ENCODE measurements at regions of chr10 and their contacts with region 1.

Region 1: DNA sequence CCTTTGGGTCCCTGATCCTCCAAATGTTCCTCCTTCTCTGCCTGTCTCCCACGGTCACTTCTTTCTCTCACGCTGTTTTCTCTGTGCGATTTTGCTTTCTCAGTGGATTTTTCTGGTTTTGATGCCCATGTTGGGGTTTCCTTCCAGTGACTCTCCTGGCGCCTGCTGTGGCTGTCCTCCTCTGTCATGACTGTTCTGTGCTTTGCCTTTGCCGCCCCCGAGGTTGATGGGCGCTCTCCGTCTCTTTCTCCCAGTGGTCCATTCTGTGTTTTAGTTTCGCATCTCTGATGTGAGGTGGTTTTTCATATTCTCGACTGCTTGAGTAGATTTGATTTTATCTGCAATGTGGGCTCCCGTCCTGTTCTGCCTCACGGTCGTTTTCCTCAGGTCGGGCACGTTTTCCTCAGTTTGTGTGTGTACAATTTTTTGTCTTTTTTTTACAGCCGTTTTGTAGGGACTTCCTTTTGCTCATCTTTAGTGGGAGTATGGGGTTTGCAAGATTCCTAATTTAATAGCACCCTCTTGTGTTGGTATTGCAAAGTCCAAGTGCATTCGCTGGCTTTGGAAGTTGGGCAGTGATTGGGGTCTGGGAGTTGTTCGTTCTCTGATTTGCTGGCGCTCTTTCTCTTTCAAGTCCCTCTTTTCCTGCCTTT is 100.0 kb downstream of the INPP5A start:
- DNase-seq: peak in 7 of 10 donors; percentile 19 to 75 (median 33)

Region 2: DNA sequence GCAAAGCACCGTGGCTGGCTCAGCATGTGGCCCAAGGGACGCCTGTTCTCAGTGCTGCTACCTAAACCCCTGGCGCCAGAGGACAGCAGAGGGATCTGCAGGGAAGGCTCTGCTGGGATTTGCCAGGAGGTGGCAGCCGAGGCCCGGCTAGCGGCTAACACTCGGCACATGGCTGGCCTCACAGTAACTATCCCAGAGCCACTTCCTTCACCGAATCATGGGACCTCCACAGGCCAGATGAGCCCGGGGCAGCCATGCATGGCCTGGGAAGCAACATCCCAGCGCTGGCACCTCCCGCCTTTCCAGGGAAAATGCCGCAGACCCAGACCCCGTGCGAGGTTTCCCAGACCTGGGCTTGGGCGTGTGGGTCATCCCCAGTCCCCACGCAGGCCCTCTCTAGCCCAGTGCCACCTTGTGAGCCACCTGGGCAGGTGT is 414.4 kb before region 1 on chr10:
- intact Hi-C with region 1: loop called (anchors 5 kb)
- DNase-seq: peak; percentile 76 to 98 (median 88)

Region 3: DNA sequence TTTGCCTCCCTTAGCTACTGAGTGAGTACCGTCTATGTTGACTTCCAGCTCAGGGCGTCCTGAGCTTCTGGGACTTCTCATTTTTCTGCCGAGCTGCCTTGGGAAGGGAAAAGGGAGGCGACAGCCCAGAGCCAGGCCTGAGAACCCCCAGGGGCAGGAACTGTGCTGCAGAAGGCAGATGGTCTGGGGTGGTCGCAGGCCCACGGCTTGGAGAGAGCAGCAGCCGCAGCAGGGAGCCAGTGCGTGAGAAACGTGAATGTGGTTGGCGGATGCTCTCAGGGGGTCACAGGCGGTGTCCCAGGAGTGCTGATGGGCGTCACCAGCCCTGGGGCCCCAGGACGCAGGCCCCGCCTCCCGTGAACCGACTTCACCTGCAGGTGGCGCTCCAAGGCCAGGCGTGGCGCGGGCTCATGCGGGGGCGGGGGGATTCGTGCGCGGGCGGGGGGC is 249.8 kb before region 1 on chr10:
- intact Hi-C with region 1: loop called (anchors 5 kb)
- DNase-seq: peak in 8 of 10 donors; percentile 34 to 93 (median 57)

Region 4: DNA sequence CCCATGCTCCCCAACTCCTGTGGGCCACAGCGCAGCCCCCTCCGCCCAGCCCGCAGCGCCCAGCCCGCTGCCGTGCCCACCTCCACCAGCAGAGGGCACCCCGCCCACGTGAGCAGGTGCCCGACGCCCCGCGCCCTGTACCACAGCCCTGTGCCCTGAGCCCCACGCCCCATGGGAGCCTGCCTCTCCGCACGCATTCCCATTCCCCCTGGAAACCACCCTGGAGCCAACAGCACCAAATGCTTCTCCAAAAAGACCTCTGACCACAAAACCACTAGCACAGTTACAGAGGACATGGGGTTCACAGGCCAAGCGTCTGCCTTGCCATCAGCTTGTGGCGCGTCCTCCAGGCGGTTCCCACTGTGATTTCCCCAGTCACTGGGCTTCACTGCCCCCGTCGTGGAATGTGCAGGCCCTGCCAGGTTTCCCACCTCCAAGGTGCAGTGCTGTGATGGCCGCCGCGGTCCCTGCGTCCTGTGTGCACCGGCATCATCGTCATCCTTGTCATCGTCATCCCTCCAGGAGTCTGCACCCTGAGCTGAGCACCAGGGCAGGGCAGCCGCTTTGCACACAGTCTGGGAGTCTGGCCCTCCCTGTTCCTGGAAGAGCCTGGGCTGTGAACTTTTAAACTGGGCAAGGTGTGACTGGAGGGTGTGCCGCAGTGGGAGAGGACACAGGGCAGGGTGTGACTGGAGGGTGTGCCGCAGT is 178.9 kb before region 1 on chr10:
- intact Hi-C with region 1: loop called (anchors 1 kb)
- DNase-seq: peak in 8 of 10 donors; percentile 34 to 94 (median 74)

Region 5: GRCh38 chr10:132536971-132537712 is 100.5 kb before region 1 on chr10:
- intact Hi-C with region 1: loop called (anchors 2 kb)
- DNase-seq: peak; percentile 100

Region 6: DNA sequence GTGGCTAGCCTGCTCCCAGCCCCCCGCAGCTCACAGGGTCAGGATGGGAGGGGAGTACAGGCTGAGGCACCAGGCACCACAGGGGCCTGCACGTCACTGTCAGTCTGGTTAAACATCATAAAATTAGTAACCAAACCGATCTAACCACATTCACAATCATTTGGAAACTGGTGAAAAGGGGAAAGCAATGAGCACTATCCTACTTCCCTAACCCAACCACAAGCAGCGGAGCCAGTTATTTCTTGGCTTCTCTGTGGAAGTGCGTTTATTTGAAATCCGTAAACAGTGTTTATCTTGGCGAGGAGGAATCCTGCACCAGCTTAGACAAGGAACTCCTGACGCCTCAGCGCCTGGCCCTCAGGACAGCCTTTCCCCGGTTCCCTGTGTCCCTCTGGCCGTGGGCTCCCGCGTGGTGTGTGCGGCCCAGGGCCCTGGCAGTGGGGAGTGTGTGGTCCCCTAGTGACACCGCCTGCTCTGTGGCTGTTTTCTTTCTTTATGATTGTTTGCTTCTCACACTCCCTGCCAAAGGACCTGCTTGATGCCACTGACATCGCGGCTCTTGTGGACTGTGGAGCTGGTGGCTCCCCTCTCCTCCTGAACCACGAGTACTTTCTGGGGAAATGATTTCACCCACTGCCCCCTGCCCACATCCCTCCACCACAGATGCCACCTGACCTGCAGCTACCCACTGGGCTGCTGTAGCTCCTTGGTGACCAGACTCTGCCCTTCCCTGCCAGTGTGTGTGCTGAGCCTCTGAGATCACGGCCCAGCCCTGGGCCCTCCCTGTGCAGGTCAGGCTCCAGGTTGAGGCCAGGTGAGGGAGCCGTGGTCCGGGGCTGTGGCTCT is 62.0 kb before region 1 on chr10:
- intact Hi-C with region 1: loop called (anchors 2 kb)
- DNase-seq: peak in 2 of 10 donors; percentile 39 to 77

Region 7: GRCh38 chr10:132593389-132593788 is 44.2 kb before region 1 on chr10:
- intact Hi-C with region 1: no loop called
- DNase-seq: no peak

Region 8: DNA sequence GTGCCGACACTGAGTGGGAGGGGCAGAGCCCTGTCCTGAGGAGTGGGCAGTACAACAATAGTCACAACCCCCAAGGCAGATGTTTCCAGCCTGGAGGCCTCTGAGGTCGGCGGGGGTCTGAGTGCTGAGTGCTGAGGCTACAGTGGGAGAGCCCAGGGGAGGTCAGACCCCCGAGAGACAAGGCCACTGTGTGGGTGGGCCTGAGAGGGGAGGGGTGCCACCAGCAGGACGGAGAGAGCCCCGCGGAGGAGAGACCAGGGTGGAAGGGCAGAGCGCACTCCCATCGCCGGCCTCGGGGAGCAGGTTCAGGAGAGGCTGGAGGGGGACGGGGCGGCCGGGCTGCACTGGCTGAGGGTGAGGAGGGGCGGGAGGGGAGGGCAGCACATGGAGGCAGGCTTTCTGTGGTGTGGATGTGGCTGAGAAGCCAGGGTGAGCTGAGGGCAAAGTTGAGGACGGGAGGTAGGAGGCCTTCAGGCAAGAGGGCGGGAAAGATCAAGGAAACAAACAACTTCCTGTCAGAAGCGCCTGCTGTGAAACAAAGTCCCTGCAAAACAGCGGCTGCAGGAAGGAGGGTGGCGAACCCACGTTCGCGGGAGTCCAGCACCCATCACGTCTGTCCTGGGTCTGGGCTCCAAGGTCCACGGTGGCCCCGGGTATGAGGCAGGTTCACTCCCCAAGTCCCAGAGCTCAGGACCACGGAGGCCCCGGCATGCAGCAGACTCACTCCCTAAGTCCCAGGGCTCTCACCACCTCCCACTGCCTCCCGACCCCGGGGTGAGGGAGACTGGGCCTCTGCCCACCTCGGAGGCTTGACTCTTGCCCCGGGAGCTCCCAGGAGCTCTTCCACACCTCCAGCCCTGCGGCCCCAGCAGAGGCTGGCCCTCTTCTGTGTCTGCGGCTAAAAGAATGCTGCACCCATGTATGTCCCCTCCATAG is 225.2 kb after region 1 on chr10:
- intact Hi-C with region 1: no loop called
- DNase-seq: peak in 3 of 10 donors; percentile 68 to 82 (median 81)